IMR-90 (cell line): ENCODE measurements at regions of chr13 and their contacts with region 1.

Region 1: DNA sequence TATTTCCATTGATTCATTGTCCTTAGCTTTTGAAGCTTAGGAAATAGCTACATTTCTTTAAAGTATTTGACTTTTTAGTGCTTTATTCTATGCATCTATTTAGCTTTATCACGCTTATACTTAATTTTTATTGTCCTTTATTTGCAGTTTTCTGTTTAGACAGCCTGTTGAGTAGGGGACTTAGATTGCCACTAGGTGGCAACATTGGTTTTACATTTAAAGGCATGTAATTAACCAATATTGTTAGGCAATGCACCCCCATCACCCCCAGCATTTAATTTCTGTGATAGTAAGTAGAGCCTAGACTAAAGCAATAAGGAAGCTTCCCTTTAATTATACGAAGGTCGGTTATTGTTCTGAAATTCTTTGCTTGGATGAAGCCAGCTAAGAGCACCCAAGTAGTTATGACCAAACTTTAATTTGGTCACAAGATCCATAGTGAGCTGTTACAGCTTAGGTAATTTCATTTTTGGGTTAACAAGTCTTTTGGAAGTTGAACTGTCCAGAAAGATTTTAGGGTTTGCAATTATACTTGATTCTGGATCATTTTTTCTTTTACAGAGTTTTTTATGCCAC is 36.5 kb downstream of the B3GLCT start:
- DNase-seq: peak; percentile 54
- ATAC-seq: peak; percentile 82
- H3K4me3 ChIP-seq: no peak overlapping the region
- H3K27ac ChIP-seq: no peak overlapping the region
- H3K4me1 ChIP-seq: no peaks in the 10 kb centered on the region
- H3K27me3 ChIP-seq: no peaks in the 10 kb centered on the region
- CTCF ChIP-seq: peak; percentile 77
- POLR2A ChIP-seq: no peak
- RAD21 ChIP-seq: peak; percentile 71

Region 2: GRCh38 chr13:29472332-29472961 is 1763.9 kb before region 1 on chr13:
- CTCF ChIA-PET with region 1: no interaction called
- POLR2A ChIA-PET with region 1: no interaction called
- dilution Hi-C with region 1: no loop called
- in situ Hi-C with region 1: no loop called
- intact Hi-C with region 1: no loop called
- DNase-seq: peak; percentile 58
- ATAC-seq: peak; percentile 53; the same call in 1 of the 2 replicates
- H3K4me3 ChIP-seq: no peak overlapping the region
- H3K27ac ChIP-seq: no peak overlapping the region
- H3K4me1 ChIP-seq: peaks cover 2% of the 10 kb centered on the region
- H3K27me3 ChIP-seq: peaks cover 8% of the 10 kb centered on the region
- CTCF ChIP-seq: peak; percentile 99
- POLR2A ChIP-seq: no peak
- RAD21 ChIP-seq: peak; percentile 65

Region 3: DNA sequence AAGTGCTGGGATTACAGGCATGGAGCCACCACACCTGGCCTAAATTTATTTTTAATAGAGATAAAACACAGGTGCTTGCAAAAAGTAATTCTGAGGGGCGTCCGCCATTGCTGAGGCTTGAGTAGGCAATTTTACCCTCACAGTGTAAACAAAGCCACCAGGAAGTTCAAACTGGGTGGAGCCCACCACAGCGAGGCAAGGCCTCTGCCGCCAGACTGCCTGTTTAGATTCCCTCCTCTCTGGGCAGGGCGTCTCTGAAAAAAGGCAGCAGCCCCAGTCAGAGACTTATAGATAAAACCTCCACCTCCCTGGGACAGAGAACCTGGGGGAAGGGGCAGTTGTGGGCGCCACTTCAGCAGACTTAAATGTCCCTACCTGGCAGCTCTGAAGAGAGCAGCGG is 14.1 kb after region 1 on chr13:
- CTCF ChIA-PET with region 1: interaction called, 16 read pairs
- POLR2A ChIA-PET with region 1: no interaction called
- dilution Hi-C with region 1: no loop called
- in situ Hi-C with region 1: no loop called
- intact Hi-C with region 1: no loop called
- DNase-seq: no peak
- ATAC-seq: no peak
- H3K4me3 ChIP-seq: no peak overlapping the region
- H3K27ac ChIP-seq: no peak overlapping the region
- H3K4me1 ChIP-seq: no peaks in the 10 kb centered on the region
- H3K27me3 ChIP-seq: no peaks in the 10 kb centered on the region
- CTCF ChIP-seq: no peak
- POLR2A ChIP-seq: no peak
- RAD21 ChIP-seq: no peak

Region 4: GRCh38 chr13:31409678-31410356 is 173.5 kb after region 1 on chr13:
- CTCF ChIA-PET with region 1: interaction called, 10 read pairs
- POLR2A ChIA-PET with region 1: no interaction called
- dilution Hi-C with region 1: no loop called
- in situ Hi-C with region 1: no loop called
- intact Hi-C with region 1: no loop called
- DNase-seq: no peak
- ATAC-seq: no peak
- H3K4me3 ChIP-seq: no peak overlapping the region
- H3K27ac ChIP-seq: no peak overlapping the region
- H3K4me1 ChIP-seq: no peaks in the 10 kb centered on the region
- H3K27me3 ChIP-seq: peaks cover 11% of the 10 kb centered on the region; the same call in 1 of the 2 replicates
- CTCF ChIP-seq: peak; percentile 19; the same call in 1 of the 2 replicates
- POLR2A ChIP-seq: no peak
- RAD21 ChIP-seq: no peak